Activated CD4-positive, alpha-beta T cell treated with anti-CD3 and anti-CD28 coated beads, Interleukin-2, amount 10 ng/mL, durations not matched to agents 24 days and 14 days (primary cell): ENCODE measurements at regions of chr1 and their contacts with region 1.

Region 1: GRCh38 chr1:117051224-117052064 is 8.7 kb upstream of the TTF2 start:
- DNase-seq: peak; percentile 81
- H3K4me3 Mint-ChIP-seq: peak overlapping the region; percentile 79
- H3K27ac Mint-ChIP-seq: peak overlapping the region; percentile 91
- H3K4me1 Mint-ChIP-seq: peaks cover 43% of the 10 kb centered on the region
- H3K27me3 Mint-ChIP-seq: no peaks in the 10 kb centered on the region

Region 2: GRCh38 chr1:117001254-117001927 is 50.1 kb before region 1 on chr1 and contains the start of gene CD101:
- intact Hi-C with region 1: loop called (anchors 1 kb)
- DNase-seq: peak; percentile 70
- H3K4me3 Mint-ChIP-seq: peak within 1 kb of the TSS; percentile 11
- H3K27ac Mint-ChIP-seq: peak within 1 kb of the TSS; percentile 66
- H3K4me1 Mint-ChIP-seq: peaks cover 29% of the 10 kb centered on the region
- H3K27me3 Mint-ChIP-seq: peaks cover under 1% of the 10 kb centered on the region
- total RNA-seq, gene CD101: 0.82 and 1.2 TPM in 2 replicates

Region 3: GRCh38 chr1:117014209-117014608 is 37.2 kb before region 1 on chr1:
- intact Hi-C with region 1: loop called (anchors 2 kb)
- DNase-seq: no peak
- H3K4me3 Mint-ChIP-seq: peak overlapping the region; percentile 1
- H3K27ac Mint-ChIP-seq: no peak overlapping the region
- H3K4me1 Mint-ChIP-seq: peaks cover 35% of the 10 kb centered on the region
- H3K27me3 Mint-ChIP-seq: no peaks in the 10 kb centered on the region

Region 4: GRCh38 chr1:117146570-117147346 is 95.3 kb after region 1 on chr1:
- intact Hi-C with region 1: no loop called
- DNase-seq: no peak
- H3K4me3 Mint-ChIP-seq: no peak overlapping the region
- H3K27ac Mint-ChIP-seq: no peak overlapping the region
- H3K4me1 Mint-ChIP-seq: peaks cover 4% of the 10 kb centered on the region
- H3K27me3 Mint-ChIP-seq: peaks cover 29% of the 10 kb centered on the region